Left ventricle myocardium superior (tissue), 1 donor: ENCODE measurements at regions of chr21 and their contacts with region 1.

Region 1: DNA sequence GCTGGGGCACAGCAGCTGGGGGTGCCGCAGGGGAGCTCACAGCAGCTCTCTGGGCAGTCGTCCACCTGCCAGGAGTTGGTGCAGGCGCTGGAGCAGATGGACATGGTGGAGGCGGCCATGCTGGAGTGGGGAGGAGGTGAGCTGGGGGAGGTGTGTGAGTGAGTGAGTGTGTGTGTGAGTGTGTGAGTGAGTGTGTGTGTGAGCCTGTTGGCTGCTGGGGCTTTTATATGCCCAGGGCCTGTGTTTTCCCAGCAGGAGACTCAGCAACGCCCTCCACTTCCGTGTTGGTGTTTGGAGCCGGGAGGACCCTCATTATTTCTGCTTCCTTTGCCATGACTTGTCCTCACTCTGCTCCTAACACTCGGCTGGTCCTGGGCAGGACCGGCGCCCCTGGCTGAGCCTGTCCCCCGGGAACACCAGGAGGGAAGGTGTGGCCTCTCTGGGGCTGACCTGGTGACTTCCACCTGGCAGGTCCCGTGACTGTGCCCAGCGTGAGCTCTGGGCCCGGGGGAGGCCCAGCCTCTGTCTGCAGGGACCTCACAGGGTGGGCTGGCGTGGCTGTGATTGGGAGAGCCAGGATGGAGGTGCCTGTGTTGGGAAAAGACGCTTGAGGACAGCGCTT is at the start of gene KRTAP10-2:
- DNase-seq: no peak
- ATAC-seq: no peak
- total RNA-seq, gene KRTAP10-2: not detected

Region 2: GRCh38 chr21:44497703-44498126 is 53.7 kb before region 1 on chr21:
- intact Hi-C with region 1: loop called (anchors 10 kb)
- DNase-seq: no peak
- ATAC-seq: peak; percentile 17